Naive thymus-derived CD4-positive, alpha-beta T cell (primary cell): ENCODE measurements at regions of chr18 and their contacts with region 1.

Region 1: GRCh38 chr18:23503038-23503962 is at the start of gene RMC1:
- DNase-seq: peak; percentile 91 to 99 (median 95)
- ATAC-seq: peak; percentile 96
- H3K4me3 ChIP-seq: peak within 1 kb of the TSS; percentile 95
- H3K4me3 Mint-ChIP-seq: peak within 1 kb of the TSS; percentile 91 to 99 (median 96)
- H3K27ac ChIP-seq: peak within 1 kb of the TSS; percentile 88
- H3K27ac Mint-ChIP-seq: peak within 1 kb of the TSS; percentile 93 to 99 (median 96)
- H3K4me1 ChIP-seq: peaks cover 22% of the 10 kb centered on the region in 2 donors
- H3K4me1 Mint-ChIP-seq: peaks cover 28 to 70% (median 64%) of the 10 kb centered on the region in 7 donors
- H3K27me3 ChIP-seq: no peaks in the 10 kb centered on the region
- H3K27me3 Mint-ChIP-seq: no peaks in the 10 kb centered on the region
- total RNA-seq, gene RMC1: 45.7 to 59.7 (median 50.0) TPM

Region 2: GRCh38 chr18:22933206-22933957 is 569.9 kb before region 1 on chr18 and contains the start of gene RBBP8:
- CTCF ChIA-PET with region 1: no interaction called
- POLR2A ChIA-PET with region 1: no interaction called
- intact Hi-C with region 1: loop called (anchors 1 to 5 kb)
- DNase-seq: peak; percentile 60 to 92 (median 81)
- ATAC-seq: peak; percentile 84
- H3K4me3 ChIP-seq: peak within 1 kb of the TSS; percentile 92
- H3K4me3 Mint-ChIP-seq: peak within 1 kb of the TSS; percentile 84 to 97 (median 92)
- H3K27ac ChIP-seq: peak within 1 kb of the TSS; percentile 86
- H3K27ac Mint-ChIP-seq: peak within 1 kb of the TSS in 8 of 9 donors; percentile 76 to 95 (median 89)
- H3K4me1 ChIP-seq: no peaks in the 10 kb centered on the region
- H3K4me1 Mint-ChIP-seq: peaks cover 7 to 37% (median 12%) of the 10 kb centered on the region in 7 donors
- H3K27me3 ChIP-seq: no peaks in the 10 kb centered on the region
- H3K27me3 Mint-ChIP-seq: peaks cover 0 to 5% (median 0%) of the 10 kb centered on the region in 5 donors
- total RNA-seq, gene RBBP8: 1.5 to 55.8 (median 2.5) TPM

Region 3: DNA sequence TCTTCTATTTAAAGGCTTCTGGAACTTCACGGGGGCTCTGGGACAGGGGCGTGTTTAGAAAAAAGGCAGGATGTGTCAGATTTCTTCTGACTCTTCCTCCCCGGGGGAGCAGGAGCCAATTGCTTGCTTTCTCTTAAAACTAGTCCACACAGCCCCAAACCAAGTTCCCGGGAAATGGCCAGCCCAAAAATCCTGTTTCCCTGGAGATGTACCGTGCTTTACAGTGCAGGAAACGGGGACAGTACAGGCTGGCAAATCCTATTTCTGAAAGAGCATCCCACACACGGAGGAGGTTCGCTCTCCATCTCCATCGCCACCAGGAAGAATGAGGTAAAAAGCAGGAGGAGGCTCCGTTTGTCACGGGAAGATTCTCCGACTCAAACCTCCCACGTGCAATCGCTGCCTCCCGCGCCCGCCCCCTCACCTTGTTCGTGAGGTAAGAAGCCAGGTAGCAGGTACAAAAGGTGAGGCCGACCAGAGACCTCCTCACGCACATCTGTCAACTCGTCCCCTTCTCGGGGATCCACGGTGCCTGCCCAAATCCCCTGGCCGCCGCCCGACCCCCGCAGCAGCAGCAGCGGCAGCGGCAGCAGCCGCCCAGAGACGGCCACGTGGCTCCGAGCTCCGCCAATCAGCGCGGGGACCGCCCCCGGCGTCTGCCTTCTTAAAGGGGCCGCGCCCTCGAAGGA is 65.8 kb before region 1 on chr18:
- CTCF ChIA-PET with region 1: no interaction called
- POLR2A ChIA-PET with region 1: interaction called, 3 read pairs
- intact Hi-C with region 1: loop called (anchors 1 kb)
- DNase-seq: peak; percentile 52 to 83 (median 71)
- ATAC-seq: peak; percentile 99
- H3K4me3 ChIP-seq: peak overlapping the region; percentile 84
- H3K4me3 Mint-ChIP-seq: peak overlapping the region; percentile 87 to 93 (median 90)
- H3K27ac ChIP-seq: peak overlapping the region; percentile 57
- H3K27ac Mint-ChIP-seq: peak overlapping the region in 7 of 9 donors; percentile 47 to 82 (median 77)
- H3K4me1 ChIP-seq: peaks cover 0 to 7% of the 10 kb centered on the region in 2 donors
- H3K4me1 Mint-ChIP-seq: peaks cover 8 to 26% (median 19%) of the 10 kb centered on the region in 7 donors
- H3K27me3 ChIP-seq: no peaks in the 10 kb centered on the region
- H3K27me3 Mint-ChIP-seq: peaks cover 0 to 2% (median 0%) of the 10 kb centered on the region in 5 donors

Region 4: DNA sequence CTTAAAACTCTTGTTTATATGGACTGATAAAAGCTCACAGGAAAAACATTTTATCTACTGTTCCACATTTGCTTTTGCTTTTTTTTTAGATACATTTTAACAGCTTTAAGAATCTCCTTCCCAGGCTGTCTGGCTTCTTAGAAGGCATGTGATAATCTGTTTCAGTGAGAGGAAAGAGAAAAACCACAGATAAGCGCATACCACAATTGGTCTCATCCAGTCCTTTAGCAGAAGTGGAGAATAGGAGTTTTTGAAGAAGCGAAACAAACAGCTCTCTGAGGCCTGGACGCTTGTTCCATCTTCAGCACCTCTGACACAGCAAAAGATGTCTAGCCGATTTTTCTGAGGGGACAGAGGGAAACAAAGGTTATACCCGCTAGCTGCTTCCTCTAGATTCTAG is 37.6 kb after region 1 on chr18:
- CTCF ChIA-PET with region 1: interaction called, 4 read pairs
- POLR2A ChIA-PET with region 1: no interaction called
- intact Hi-C with region 1: loop called in 1 of 2 experiments (anchors 1 kb)
- DNase-seq: peak in 6 of 9 donors; percentile 23 to 49 (median 36)
- ATAC-seq: peak; percentile 85
- H3K4me3 ChIP-seq: no peak overlapping the region
- H3K4me3 Mint-ChIP-seq: peak overlapping the region; percentile 52 to 81 (median 70)
- H3K27ac ChIP-seq: peak overlapping the region; percentile 44
- H3K27ac Mint-ChIP-seq: peak overlapping the region; percentile 70 to 92 (median 86)
- H3K4me1 ChIP-seq: peaks cover 11 to 37% of the 10 kb centered on the region in 2 donors
- H3K4me1 Mint-ChIP-seq: peaks cover 31 to 43% (median 41%) of the 10 kb centered on the region in 7 donors
- H3K27me3 ChIP-seq: no peaks in the 10 kb centered on the region
- H3K27me3 Mint-ChIP-seq: no peaks in the 10 kb centered on the region

Region 5: DNA sequence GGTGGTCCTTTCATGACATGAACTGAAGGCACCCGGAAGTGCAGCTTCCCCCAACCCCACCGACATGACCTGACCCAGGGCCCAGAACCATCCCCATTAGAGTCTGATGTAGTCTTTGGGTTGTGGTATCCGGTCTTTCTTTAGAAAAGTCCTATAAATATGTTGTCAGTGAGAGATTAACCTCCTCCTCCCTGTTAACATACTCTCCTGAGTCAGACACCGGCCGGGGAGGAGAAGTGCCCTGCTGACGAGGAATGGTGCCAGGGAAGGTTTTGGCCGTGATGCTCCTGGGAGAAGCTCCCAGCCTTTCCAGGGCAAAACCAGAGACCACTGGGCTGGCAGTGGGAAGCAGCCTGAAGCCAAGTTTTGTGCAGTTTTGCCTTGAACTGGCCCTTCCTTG is 294.9 kb after region 1 on chr18:
- CTCF ChIA-PET with region 1: no interaction called
- POLR2A ChIA-PET with region 1: no interaction called
- intact Hi-C with region 1: no loop called
- DNase-seq: no peak
- ATAC-seq: no peak
- H3K4me3 ChIP-seq: no peak overlapping the region
- H3K4me3 Mint-ChIP-seq: no peak overlapping the region
- H3K27ac ChIP-seq: no peak overlapping the region
- H3K27ac Mint-ChIP-seq: peak overlapping the region in 1 of 9 donors; percentile 23
- H3K4me1 ChIP-seq: no peaks in the 10 kb centered on the region
- H3K4me1 Mint-ChIP-seq: no peaks in the 10 kb centered on the region
- H3K27me3 ChIP-seq: no peaks in the 10 kb centered on the region
- H3K27me3 Mint-ChIP-seq: peaks cover 5 to 32% (median 8%) of the 10 kb centered on the region in 5 donors

Region 6: DNA sequence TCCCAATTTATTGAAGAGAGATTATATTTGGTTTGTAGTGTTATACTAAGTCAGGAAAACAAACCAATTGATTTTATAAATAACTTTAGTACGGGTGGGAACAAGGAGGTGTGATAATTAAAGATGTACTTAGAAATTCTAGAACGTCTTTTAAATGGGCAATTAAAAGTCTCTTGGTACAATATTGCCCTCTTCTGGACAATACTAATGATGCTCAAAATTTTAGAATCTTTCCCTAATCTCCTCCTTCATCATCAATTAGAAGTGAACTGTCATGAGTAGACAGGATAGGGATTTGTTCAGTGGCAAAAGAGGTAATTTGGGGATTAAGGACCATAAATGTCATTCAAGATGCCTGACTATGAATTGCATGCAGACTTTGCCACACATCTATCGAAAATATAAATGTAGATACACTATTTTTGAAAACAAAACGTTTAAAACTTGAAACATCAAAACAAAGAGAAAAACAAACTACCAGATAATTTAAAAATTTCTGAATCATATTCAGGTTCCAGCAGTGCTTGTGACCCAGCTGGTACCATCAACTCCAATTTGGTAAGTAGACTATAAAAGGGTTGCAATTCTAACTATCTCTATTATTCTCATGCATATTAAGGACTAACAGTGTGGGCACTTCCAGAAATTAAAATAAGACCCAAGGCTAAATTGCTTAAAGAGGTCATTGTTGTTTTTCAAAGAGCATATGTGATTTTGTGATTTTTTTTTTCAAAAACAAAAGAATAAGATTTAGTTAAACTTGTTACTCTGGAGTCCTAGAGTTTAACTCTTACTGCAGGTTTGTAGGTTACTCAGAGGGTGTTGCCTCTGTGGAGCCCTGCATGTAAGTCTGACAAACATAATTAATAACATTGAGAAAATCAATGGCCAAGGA is 309.5 kb after region 1 on chr18:
- CTCF ChIA-PET with region 1: interaction called, 3 read pairs
- POLR2A ChIA-PET with region 1: no interaction called
- intact Hi-C with region 1: loop called (anchors 1 kb)
- DNase-seq: peak in 5 of 9 donors; percentile 21 to 46 (median 41)
- ATAC-seq: peak; percentile 61
- H3K4me3 ChIP-seq: no peak overlapping the region
- H3K4me3 Mint-ChIP-seq: no peak overlapping the region
- H3K27ac ChIP-seq: no peak overlapping the region
- H3K27ac Mint-ChIP-seq: peak overlapping the region in 1 of 9 donors; percentile 45
- H3K4me1 ChIP-seq: peaks cover 6 to 14% of the 10 kb centered on the region in 2 donors
- H3K4me1 Mint-ChIP-seq: peaks cover 4 to 29% (median 27%) of the 10 kb centered on the region in 7 donors
- H3K27me3 ChIP-seq: no peaks in the 10 kb centered on the region
- H3K27me3 Mint-ChIP-seq: peaks cover 0 to 18% (median 0%) of the 10 kb centered on the region in 5 donors

Region 7: DNA sequence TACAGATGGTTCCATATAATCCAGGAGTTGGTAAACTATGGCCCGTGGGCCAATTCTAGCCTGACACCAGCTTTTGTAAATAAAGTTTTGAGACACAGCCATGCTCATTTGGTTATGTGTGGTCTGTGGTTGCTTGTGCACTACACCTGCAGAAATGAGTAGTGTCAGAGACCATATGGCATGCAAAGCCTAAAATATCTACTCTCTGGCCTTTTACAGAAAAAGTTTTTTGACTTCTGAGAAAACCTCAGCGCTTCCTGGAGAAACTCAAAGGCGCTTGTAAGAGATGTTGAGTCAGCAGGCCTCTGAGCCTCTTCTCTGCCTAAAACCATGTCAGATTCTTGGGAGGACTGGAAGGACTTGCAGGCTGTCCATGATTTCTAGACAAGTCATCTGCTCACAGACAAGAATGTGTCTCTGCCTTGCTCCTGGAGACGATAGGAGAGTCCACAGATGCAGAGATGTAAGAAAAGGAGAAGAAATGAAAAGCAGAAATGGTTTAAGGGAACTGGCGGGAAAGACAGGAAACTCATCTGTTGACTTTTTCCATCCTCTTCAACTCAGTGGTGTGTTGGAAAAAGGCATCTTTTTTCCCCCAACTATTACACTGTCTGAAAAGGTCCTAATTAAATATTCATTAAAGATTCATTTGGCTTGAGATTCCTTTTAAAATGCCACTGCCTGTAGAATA is 516.5 kb after region 1 on chr18:
- CTCF ChIA-PET with region 1: no interaction called
- POLR2A ChIA-PET with region 1: no interaction called
- intact Hi-C with region 1: loop called in 1 of 2 experiments (anchors 2 kb)
- DNase-seq: peak in 8 of 9 donors; percentile 53 to 74 (median 62)
- ATAC-seq: peak; percentile 76
- H3K4me3 ChIP-seq: peak overlapping the region; percentile 32
- H3K4me3 Mint-ChIP-seq: peak overlapping the region; percentile 63 to 97 (median 80)
- H3K27ac ChIP-seq: peak overlapping the region; percentile 53
- H3K27ac Mint-ChIP-seq: peak overlapping the region; percentile 75 to 97 (median 93)
- H3K4me1 ChIP-seq: peaks cover 79 to 84% of the 10 kb centered on the region in 2 donors
- H3K4me1 Mint-ChIP-seq: peaks cover 76 to 93% (median 86%) of the 10 kb centered on the region in 7 donors
- H3K27me3 ChIP-seq: no peaks in the 10 kb centered on the region
- H3K27me3 Mint-ChIP-seq: no peaks in the 10 kb centered on the region